Posterior vena cava (tissue), 2 donors: ENCODE measurements at regions of chr15 and their contacts with region 1.

Region 1: GRCh38 chr15:40739854-40740253 is 15.2 kb downstream of the RMDN3 start:
- DNase-seq: no peak

Region 2: DNA sequence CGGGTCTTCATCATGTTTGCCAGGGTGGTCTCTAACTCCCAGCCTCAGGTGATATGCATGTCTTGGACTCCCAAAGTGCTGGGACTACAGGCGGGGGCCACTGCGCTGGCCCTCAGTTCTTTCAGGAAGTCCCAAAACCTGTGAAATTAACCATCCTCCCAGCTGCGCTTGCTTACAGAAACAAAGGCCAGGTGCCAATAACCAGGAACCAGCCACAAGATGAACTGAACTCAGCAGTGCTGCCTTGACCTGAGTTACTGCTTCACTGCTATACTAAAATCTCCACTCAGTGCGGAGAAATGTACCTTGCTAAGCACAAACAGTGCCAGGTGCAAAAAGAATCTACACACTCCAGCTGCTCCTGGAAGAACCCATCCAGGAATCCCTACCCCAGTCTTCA is 20.1 kb after region 1 on chr15:
- intact Hi-C with region 1: loop called in 1 of 2 experiments (anchors 1 kb)
- DNase-seq: no peak